ENCODE measurements at regions of chr7 and their contacts with region 1.

Region 1: DNA sequence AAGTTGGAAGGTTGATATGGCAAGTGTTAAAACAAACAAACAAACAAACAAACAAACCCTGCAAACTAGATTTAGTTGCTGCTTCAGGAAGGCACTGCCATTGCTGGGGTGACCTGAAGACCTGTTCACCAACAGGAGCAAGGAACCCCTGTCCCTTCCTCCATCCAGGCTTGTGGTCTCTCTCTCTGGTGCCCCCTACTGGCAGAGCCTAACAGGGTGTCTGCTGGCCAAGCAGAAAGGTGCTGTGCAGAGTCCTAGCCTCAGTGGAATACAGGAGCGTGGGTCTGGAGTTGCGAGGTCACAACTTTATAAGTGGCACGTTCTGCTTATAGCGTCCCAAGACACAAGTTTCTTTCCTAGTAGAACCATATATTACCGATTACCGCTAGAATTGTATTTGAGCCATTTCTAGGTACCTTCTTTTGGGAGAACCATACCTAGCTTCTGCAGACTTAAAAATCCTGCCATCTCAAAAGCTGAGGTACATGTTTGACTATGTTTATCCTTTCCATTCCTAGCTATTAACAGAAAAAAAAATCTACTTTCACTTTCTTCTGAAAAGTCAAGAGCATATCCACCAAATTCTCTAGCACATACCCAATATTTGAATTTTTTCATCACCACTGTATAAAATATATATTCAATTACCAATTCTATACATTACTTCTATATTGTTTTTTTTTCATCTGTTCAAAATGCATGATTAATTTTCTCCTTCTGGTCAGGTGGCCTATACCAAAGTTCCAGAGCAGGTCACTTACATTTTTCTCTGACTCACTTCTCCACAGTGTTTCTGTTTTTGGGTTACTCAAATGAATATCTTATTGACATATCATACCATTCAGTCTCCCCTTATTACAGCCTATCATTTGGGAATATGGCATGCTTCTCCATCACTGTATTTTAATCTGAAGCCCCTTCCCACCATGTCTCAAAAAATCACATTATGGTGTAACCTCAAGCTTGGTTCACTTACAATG is 29.1 kb upstream of the CALD1 start:
- DNase-seq: peak; percentile 30
- H3K4me3 Mint-ChIP-seq: no peak overlapping the region
- H3K27ac Mint-ChIP-seq: peak overlapping the region; percentile 32
- H3K4me1 Mint-ChIP-seq: peaks cover 14% of the 10 kb centered on the region
- H3K27me3 Mint-ChIP-seq: peaks cover 2% of the 10 kb centered on the region

Region 2: GRCh38 chr7:134632937-134633540 is 117.3 kb before region 1 on chr7:
- intact Hi-C with region 1: loop called (anchors 1 kb)
- DNase-seq: no peak
- H3K4me3 Mint-ChIP-seq: no peak overlapping the region
- H3K27ac Mint-ChIP-seq: no peak overlapping the region
- H3K4me1 Mint-ChIP-seq: peaks cover 20% of the 10 kb centered on the region
- H3K27me3 Mint-ChIP-seq: peaks cover 5% of the 10 kb centered on the region

Region 3: GRCh38 chr7:134710859-134711624 is 39.3 kb before region 1 on chr7:
- intact Hi-C with region 1: loop called (anchors 2 kb)
- DNase-seq: peak; percentile 34
- H3K4me3 Mint-ChIP-seq: peak overlapping the region; percentile 60
- H3K27ac Mint-ChIP-seq: peak overlapping the region; percentile 72
- H3K4me1 Mint-ChIP-seq: peaks cover 21% of the 10 kb centered on the region
- H3K27me3 Mint-ChIP-seq: no peaks in the 10 kb centered on the region

Region 4: GRCh38 chr7:134865001-134865845 is 114.8 kb after region 1 on chr7:
- intact Hi-C with region 1: loop called (anchors 5 kb)
- DNase-seq: peak; percentile 44
- H3K4me3 Mint-ChIP-seq: peak overlapping the region; percentile 8
- H3K27ac Mint-ChIP-seq: peak overlapping the region; percentile 49
- H3K4me1 Mint-ChIP-seq: peaks cover 30% of the 10 kb centered on the region
- H3K27me3 Mint-ChIP-seq: no peaks in the 10 kb centered on the region

Region 5: GRCh38 chr7:135170274-135170997 is 420.1 kb after region 1 on chr7 and contains the start of gene CYREN:
- intact Hi-C with region 1: loop called (anchors 10 kb)
- DNase-seq: peak; percentile 84
- H3K4me3 Mint-ChIP-seq: peak within 1 kb of the TSS; percentile 95
- H3K27ac Mint-ChIP-seq: peak within 1 kb of the TSS; percentile 96
- H3K4me1 Mint-ChIP-seq: peaks cover 38% of the 10 kb centered on the region
- H3K27me3 Mint-ChIP-seq: no peaks in the 10 kb centered on the region
- total RNA-seq, gene CYREN: 58.8 and 58.9 TPM in 2 replicates